Activated CD4-positive, alpha-beta memory T cell treated with anti-CD3 and anti-CD28 coated beads for 36 hours (primary cell): ENCODE measurements at regions of chr4 and their contacts with region 1.

Region 1: GRCh38 chr4:36351082-36351666 is 69.8 kb downstream of the DTHD1 start:
- DNase-seq: peak; percentile 85
- H3K4me3 Mint-ChIP-seq: no peak overlapping the region
- H3K27ac Mint-ChIP-seq: no peak overlapping the region
- H3K4me1 Mint-ChIP-seq: peaks cover 29% of the 10 kb centered on the region
- H3K27me3 Mint-ChIP-seq: no peaks in the 10 kb centered on the region

Region 2: GRCh38 chr4:36208893-36209473 is 142.2 kb before region 1 on chr4:
- CTCF ChIA-PET with region 1: no interaction called
- POLR2A ChIA-PET with region 1: no interaction called
- intact Hi-C with region 1: loop called (anchors 1 kb)
- DNase-seq: peak; percentile 54
- H3K4me3 Mint-ChIP-seq: no peak overlapping the region
- H3K27ac Mint-ChIP-seq: peak overlapping the region; percentile 73
- H3K4me1 Mint-ChIP-seq: peaks cover 52% of the 10 kb centered on the region
- H3K27me3 Mint-ChIP-seq: no peaks in the 10 kb centered on the region

Region 3: DNA sequence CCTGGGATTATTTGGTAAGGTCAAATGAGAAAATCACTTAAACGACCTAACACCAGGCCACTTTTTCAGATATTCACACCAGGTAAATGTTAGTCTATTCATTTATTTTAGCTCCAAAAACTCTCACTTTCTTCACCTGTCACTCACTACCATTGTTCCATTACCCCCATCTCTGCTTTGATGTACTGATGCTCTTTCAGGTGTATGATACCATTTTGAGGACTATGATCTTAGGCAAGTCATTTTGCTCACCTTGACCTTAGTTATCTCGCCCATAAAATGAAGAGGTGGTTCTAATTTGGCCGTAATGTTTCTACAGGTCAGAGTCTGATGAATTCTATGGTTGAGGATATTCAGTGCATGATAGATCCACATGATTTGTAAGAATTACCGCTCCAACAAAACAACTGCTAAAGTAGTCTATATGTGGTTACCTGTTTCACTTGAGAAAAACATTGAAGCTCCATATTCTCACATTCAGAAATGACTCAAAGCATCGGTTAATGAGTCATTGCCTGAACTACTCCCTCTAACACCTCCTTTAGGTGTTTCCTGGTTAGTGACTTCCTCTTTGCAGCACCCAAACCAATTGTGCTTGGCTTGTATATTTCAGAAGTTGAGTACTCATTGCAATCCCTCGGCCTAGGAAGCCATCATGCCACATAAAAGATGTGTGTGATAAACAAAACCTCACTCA is 65.2 kb before region 1 on chr4:
- CTCF ChIA-PET with region 1: interaction called, 3 read pairs
- POLR2A ChIA-PET with region 1: interaction called, 5 read pairs
- intact Hi-C with region 1: loop called (anchors 1 kb)
- DNase-seq: peak; percentile 75
- H3K4me3 Mint-ChIP-seq: peak overlapping the region; percentile 53
- H3K27ac Mint-ChIP-seq: peak overlapping the region; percentile 87
- H3K4me1 Mint-ChIP-seq: peaks cover 60% of the 10 kb centered on the region
- H3K27me3 Mint-ChIP-seq: no peaks in the 10 kb centered on the region

Region 4: GRCh38 chr4:36332023-36332781 is 19.0 kb before region 1 on chr4:
- CTCF ChIA-PET with region 1: interaction called, 7 read pairs
- POLR2A ChIA-PET with region 1: interaction called, 11 read pairs
- intact Hi-C with region 1: loop called (anchors 1 kb)
- DNase-seq: peak; percentile 57
- H3K4me3 Mint-ChIP-seq: no peak overlapping the region
- H3K27ac Mint-ChIP-seq: peak overlapping the region; percentile 78
- H3K4me1 Mint-ChIP-seq: peaks cover 23% of the 10 kb centered on the region
- H3K27me3 Mint-ChIP-seq: no peaks in the 10 kb centered on the region

Region 5: GRCh38 chr4:36399762-36400353 is 48.7 kb after region 1 on chr4:
- CTCF ChIA-PET with region 1: interaction called, 91 read pairs
- POLR2A ChIA-PET with region 1: interaction called, 5 read pairs
- intact Hi-C with region 1: loop called (anchors 1 kb)
- DNase-seq: peak; percentile 61
- H3K4me3 Mint-ChIP-seq: no peak overlapping the region
- H3K27ac Mint-ChIP-seq: no peak overlapping the region
- H3K4me1 Mint-ChIP-seq: peaks cover 17% of the 10 kb centered on the region
- H3K27me3 Mint-ChIP-seq: no peaks in the 10 kb centered on the region